OCI-LY7 (cell line): ENCODE measurements at regions of chrX and their contacts with region 1.

Region 1: GRCh38 chrX:20325786-20326388 is 59.2 kb upstream of the RPS6KA3 start:
- DNase-seq: no peak
- H3K4me3 ChIP-seq: no peak overlapping the region
- H3K27ac ChIP-seq: no peak overlapping the region
- H3K4me1 ChIP-seq: peaks cover 10% of the 10 kb centered on the region
- CTCF ChIP-seq: no peak

Region 2: DNA sequence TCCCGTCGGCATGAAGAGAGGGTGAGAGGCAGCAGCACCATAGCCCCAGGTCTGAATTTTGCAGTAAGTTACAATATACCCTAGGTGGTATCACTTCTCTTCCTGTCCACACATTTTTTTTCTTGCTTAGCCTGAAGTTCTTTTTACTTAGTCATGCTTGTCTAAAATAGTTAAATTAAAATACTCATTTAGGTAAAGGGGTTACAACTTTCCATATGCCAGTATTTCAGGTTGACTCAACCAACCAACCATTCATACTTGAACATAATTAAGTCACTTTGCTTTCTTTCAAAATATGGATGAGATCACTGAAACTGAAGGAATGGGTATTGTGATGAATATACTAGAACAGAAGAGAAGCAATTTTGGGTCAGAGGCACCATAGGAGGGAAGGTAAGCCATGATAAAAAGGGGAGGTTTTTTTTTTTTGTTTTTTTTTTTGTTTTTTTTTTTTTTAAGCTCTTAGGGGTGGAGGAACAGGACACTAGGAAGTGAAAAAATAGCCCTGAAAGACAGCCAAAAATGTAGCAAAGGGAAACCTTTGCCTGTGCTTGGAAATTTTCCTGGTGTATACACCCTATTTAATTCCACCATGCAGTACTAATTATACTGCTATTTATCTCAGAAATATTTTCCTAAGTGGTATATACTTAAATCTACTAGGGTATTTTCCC is 100.9 kb before region 1 on chrX:
- CTCF ChIA-PET with region 1: no interaction called
- POLR2A ChIA-PET with region 1: no interaction called
- intact Hi-C with region 1: no loop called
- DNase-seq: peak; percentile 3
- H3K4me3 ChIP-seq: no peak overlapping the region
- H3K27ac ChIP-seq: no peak overlapping the region
- H3K4me1 ChIP-seq: peaks cover 4% of the 10 kb centered on the region
- CTCF ChIP-seq: no peak

Region 3: GRCh38 chrX:20252381-20253231 is 73.3 kb before region 1 on chrX:
- CTCF ChIA-PET with region 1: no interaction called
- POLR2A ChIA-PET with region 1: no interaction called
- intact Hi-C with region 1: loop called (anchors 5 kb)
- DNase-seq: peak; percentile 52
- H3K4me3 ChIP-seq: no peak overlapping the region
- H3K27ac ChIP-seq: no peak overlapping the region
- H3K4me1 ChIP-seq: peaks cover 12% of the 10 kb centered on the region
- CTCF ChIP-seq: peak; percentile 69